Activated CD4-positive, alpha-beta T cell treated with anti-CD3 and anti-CD28 coated beads for 36 hours (primary cell): ENCODE measurements at regions of chr5 and their contacts with region 1.

Region 1: DNA sequence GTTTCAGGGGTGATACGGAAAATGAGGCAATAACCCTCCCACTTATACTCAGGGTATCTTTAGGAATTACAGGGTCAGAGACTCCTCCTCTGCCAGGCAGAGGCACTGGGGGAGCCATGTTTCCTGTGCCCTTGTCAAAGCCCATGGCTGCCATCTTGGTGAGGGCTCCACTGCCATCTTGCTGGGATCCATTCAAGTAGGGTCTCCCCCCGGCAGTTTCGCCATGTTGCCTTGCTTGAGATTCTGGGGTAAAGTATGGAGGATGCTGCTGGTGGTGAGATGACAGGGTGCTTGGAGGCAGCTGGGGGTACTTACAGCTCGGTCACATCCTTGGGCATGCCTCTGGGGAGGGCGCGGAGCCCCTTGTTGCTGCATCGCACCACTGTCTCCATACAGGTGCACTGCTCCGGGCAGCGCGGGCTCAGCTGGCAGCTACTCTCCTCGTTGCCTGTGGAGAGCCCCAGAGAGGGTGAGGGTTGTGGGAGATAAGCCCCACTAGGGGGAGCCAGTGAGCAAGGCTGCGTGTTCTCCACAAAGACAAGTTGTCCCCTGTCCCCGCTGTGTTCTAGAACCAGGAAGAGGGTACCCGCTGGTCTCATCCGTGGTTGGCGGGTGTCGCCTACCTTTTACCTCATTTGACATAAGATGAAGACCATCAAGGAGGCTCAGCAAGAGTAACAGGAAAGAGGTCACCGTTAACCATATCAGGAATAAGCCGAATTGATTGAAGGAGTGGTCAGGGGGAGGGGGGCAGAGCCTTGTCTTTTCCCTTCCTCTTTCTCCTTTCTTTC is 169.0 kb upstream of the PANK3 start:
- DNase-seq: peak; percentile 84
- ATAC-seq: peak; percentile 96
- H3K4me3 Mint-ChIP-seq: no peak overlapping the region
- H3K27ac Mint-ChIP-seq: no peak overlapping the region
- H3K4me1 Mint-ChIP-seq: peaks cover 10% of the 10 kb centered on the region
- H3K27me3 Mint-ChIP-seq: peaks cover 7% of the 10 kb centered on the region

Region 2: DNA sequence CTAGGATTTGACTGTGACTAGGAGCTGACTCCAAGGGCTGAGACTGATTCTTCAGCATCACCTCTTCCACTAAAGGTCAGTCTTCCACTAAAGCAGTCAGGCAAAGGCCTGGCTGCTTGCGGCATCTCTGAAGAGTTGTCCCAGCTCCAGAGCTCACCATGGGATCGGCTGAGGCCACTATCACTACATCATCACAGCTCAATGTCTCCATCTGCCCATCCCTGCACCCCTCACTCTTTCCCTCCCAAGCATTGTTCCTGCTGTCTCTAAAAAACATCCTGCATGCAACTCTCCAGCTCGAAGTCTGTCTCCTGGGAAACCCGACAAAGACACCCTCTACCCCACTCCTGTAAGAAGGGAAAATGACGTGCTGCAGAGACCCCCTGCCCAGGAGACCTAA is 472.2 kb before region 1 on chr5:
- CTCF ChIA-PET with region 1: no interaction called
- POLR2A ChIA-PET with region 1: no interaction called
- intact Hi-C with region 1: loop called in 1 of 2 experiments (anchors 5 kb)
- DNase-seq: no peak
- ATAC-seq: no peak
- H3K4me3 Mint-ChIP-seq: no peak overlapping the region
- H3K27ac Mint-ChIP-seq: no peak overlapping the region
- H3K4me1 Mint-ChIP-seq: peaks cover 8% of the 10 kb centered on the region
- H3K27me3 Mint-ChIP-seq: peaks cover 11% of the 10 kb centered on the region

Region 3: DNA sequence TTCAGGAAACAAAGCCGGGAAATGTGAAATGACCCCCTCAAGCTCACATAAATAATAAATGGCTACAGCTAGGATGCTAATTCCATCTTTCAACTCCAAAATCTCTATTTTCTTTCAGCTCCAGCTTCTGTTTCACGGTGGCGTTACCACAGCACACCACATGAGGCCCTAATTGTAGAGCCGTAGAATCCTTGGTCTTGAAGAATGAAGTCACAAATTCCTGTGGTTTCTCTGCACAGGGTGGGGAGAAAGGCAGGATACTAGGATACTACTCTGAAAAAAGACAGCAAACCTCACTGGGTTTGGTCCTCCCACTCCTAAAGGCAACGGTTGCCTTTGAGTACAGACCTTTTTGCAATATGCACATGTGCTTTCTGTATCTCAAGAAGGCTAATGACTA is 275.9 kb before region 1 on chr5:
- CTCF ChIA-PET with region 1: no interaction called
- POLR2A ChIA-PET with region 1: no interaction called
- intact Hi-C with region 1: no loop called
- DNase-seq: no peak
- ATAC-seq: no peak
- H3K4me3 Mint-ChIP-seq: no peak overlapping the region
- H3K27ac Mint-ChIP-seq: no peak overlapping the region
- H3K4me1 Mint-ChIP-seq: no peaks in the 10 kb centered on the region
- H3K27me3 Mint-ChIP-seq: no peaks in the 10 kb centered on the region

Region 4: DNA sequence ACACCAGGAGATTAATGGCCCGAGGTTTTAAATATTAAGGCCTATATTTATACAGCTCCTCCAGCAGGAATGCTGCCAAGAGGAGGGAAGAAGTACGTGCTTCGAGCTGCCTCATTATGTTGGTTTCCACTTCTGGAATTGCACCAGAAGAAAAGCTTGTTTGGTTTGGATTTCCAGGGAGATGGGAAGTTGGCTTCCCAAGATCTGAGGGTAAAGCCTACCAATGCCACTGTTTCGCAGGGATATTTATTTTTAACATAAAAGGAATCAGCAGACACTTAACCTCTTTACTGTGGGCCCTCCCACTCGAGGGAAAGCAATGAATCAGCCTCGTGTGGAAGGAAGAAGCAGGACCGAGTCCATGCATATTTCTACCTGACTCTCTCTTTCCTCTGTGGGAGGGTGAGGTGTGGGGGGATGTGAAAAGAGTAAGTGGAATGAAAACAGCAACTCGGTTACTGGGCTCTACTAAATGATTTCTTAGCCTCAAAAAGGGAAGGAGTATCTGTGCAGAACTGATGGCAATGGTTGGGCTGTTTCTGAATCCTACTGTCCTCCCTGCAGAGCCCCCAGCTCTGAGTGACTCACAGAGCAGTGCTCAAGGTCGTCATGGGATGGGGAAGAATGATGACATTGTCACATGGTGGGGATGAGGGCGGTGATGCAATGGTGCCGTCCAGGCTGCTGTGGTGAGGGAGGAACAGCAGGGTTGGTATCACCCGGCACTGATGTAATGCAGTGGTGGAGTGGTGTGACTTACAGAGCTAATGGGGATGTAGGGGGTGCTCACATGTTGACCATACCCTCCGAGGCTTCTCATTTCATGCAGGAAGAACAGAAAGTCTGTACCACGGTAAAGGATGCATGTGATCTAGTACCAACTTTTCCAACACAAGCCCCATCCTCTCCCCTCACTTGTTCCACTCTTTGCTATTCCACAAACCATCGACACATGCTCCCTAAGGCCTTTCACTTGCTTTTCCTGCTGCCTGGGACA is 46.0 kb after region 1 on chr5:
- CTCF ChIA-PET with region 1: no interaction called
- POLR2A ChIA-PET with region 1: no interaction called
- intact Hi-C with region 1: loop called in 1 of 2 experiments (anchors 2 kb)
- DNase-seq: peak; percentile 81
- ATAC-seq: peak; percentile 77
- H3K4me3 Mint-ChIP-seq: no peak overlapping the region
- H3K27ac Mint-ChIP-seq: peak overlapping the region; percentile 90
- H3K4me1 Mint-ChIP-seq: peaks cover 58% of the 10 kb centered on the region
- H3K27me3 Mint-ChIP-seq: no peaks in the 10 kb centered on the region

Region 5: DNA sequence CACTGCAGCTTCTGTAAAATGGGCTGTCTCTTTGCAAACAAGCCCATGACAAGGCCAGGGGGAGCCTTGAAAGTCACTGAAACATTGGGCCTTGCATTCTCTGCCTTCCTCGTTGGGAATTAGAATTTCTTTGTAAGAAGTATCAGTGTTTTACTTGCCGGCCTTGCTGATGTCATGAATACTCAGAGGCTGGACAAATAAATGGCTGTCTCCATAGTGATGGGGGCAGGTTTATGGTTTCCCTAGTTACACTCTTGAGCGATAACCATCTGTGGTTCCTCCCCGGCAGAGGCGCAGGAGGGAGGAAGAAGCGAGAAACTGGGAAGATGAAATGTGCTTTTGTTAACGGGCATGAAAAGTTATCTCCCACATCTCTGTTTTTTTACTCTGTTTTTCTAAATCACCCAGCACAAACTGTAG is 103.7 kb after region 1 on chr5:
- CTCF ChIA-PET with region 1: interaction called, 3 read pairs
- POLR2A ChIA-PET with region 1: no interaction called
- intact Hi-C with region 1: loop called in 1 of 2 experiments (anchors 5 kb)
- DNase-seq: peak; percentile 63
- ATAC-seq: peak; percentile 59
- H3K4me3 Mint-ChIP-seq: peak overlapping the region; percentile 59
- H3K27ac Mint-ChIP-seq: peak overlapping the region; percentile 84
- H3K4me1 Mint-ChIP-seq: peaks cover 43% of the 10 kb centered on the region
- H3K27me3 Mint-ChIP-seq: peaks cover 2% of the 10 kb centered on the region

Region 6: DNA sequence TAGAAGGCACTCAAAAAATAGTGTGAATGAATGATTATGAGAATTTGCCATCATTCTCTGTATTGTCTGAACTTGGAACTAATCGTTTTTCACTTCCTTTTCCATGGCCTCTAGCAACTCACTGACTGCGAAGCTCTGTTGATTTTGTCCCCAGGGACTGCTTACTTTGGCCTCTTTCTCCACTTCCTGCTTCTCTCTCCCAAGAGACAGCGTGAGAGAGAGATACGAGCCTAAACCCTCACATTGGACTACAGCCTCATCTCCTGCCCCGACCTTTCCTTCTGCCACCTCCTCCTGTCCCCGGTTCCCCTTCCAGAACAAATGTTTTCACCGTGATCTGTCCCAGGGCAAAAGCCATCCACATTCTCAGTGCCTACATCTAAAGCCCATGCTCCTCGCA is 131.7 kb after region 1 on chr5:
- CTCF ChIA-PET with region 1: no interaction called
- POLR2A ChIA-PET with region 1: no interaction called
- intact Hi-C with region 1: loop called in 1 of 2 experiments (anchors 10 kb)
- DNase-seq: no peak
- ATAC-seq: no peak
- H3K4me3 Mint-ChIP-seq: no peak overlapping the region
- H3K27ac Mint-ChIP-seq: no peak overlapping the region
- H3K4me1 Mint-ChIP-seq: peaks cover under 1% of the 10 kb centered on the region
- H3K27me3 Mint-ChIP-seq: peaks cover 13% of the 10 kb centered on the region

Region 7: DNA sequence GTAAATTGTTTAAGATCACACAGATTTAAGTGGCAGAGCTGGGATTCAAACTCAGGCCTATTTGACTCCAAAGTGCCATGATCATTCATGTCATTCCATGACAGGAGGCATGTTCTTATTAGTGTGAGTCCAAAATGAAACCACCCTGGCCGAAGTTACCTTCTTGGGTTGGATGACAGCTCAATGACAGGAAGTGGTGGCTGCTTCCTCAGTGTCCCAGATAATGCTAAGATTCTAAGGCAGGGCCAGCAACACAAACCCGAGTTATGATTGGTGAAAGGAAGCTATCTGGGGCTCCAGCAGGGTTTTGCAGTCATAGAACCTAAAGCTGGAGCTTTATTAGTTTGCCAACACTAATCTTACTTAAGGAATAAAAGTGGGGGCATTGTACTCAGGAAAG is 212.3 kb after region 1 on chr5:
- CTCF ChIA-PET with region 1: no interaction called
- POLR2A ChIA-PET with region 1: no interaction called
- intact Hi-C with region 1: no loop called
- DNase-seq: no peak
- ATAC-seq: no peak
- H3K4me3 Mint-ChIP-seq: no peak overlapping the region
- H3K27ac Mint-ChIP-seq: no peak overlapping the region
- H3K4me1 Mint-ChIP-seq: no peaks in the 10 kb centered on the region
- H3K27me3 Mint-ChIP-seq: peaks cover 2% of the 10 kb centered on the region